ENCODE measurements at regions of chrX and their contacts with region 1.

Region 1: GRCh38 chrX:6071731-6072130 is 156.9 kb downstream of the NLGN4X start:
- DNase-seq: no peak
- H3K4me3 ChIP-seq: no peak overlapping the region
- H3K27ac ChIP-seq: no peak overlapping the region
- H3K4me1 ChIP-seq: no peaks in the 10 kb centered on the region
- H3K27me3 ChIP-seq: peaks cover 0 to 3% of the 10 kb centered on the region in 2 donors
- CTCF ChIP-seq: no peak
- POLR2A ChIP-seq: no peak

Region 2: GRCh38 chrX:5976332-5976731 is 95.4 kb before region 1 on chrX:
- intact Hi-C with region 1: no loop called
- DNase-seq: no peak
- H3K4me3 ChIP-seq: no peak overlapping the region
- H3K27ac ChIP-seq: no peak overlapping the region
- H3K4me1 ChIP-seq: no peaks in the 10 kb centered on the region
- H3K27me3 ChIP-seq: no peaks in the 10 kb centered on the region
- CTCF ChIP-seq: no peak
- POLR2A ChIP-seq: no peak

Region 3: GRCh38 chrX:6095469-6095868 is 23.7 kb after region 1 on chrX:
- intact Hi-C with region 1: loop called (anchors 1 kb)
- DNase-seq: no peak
- H3K4me3 ChIP-seq: no peak overlapping the region
- H3K27ac ChIP-seq: no peak overlapping the region
- H3K4me1 ChIP-seq: no peaks in the 10 kb centered on the region
- H3K27me3 ChIP-seq: no peaks in the 10 kb centered on the region
- CTCF ChIP-seq: no peak
- POLR2A ChIP-seq: no peak

Measured in breast epithelium (tissue), 4 donors.